ENCODE measurements at regions of chr5 and their contacts with region 1.

Region 1: DNA sequence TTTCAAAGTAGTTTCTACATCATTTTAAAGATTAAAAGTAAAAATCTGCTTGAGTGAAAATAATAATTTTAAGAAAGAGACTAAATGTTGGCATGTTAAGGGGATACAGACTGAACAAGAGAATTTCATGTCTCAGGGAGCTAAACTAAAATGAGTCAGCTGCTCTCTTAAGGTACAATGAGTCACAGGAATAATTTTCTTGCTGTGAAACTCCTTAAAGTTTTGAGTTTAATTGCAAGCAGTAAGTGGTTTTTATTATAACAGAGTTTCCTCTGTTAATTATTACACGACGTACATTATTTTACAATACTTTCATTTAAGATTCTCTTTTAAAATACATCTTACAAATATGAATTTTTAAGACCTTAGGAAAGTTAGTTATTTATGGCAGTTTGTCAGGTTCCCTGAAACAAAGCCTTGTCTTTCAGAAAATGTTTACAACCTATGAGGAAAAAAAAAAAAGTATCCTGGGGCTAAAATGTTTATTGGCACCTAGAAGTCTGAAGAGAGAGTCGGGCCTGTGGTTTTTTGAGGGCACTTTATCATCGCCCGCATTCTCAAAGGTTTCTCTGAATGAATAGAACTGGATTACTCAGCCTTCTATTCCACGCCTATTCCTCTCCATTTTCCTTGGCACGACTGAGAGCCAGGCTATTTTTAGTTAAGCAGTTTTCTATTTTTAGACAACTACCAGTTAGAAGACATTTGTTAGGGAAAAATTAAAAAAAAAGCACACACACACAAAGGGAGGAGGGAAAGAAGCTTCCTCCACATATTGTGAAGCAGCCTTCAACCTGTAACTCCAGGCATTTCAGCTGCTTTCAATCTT is 97.4 kb downstream of the MEF2C start:
- DNase-seq: peak; percentile 96
- H3K4me3 ChIP-seq: peak overlapping the region in 1 of 3 experiments; percentile 46
- H3K27ac ChIP-seq: peak overlapping the region; percentile 97
- H3K4me1 ChIP-seq: peaks cover 33% of the 10 kb centered on the region
- H3K27me3 ChIP-seq: no peaks in the 10 kb centered on the region
- CTCF ChIP-seq: no peak
- POLR2A ChIP-seq: no peak

Region 2: GRCh38 chr5:88226881-88227450 is 558.6 kb before region 1 on chr5:
- CTCF ChIA-PET with region 1: no interaction called
- POLR2A ChIA-PET with region 1: no interaction called
- dilution Hi-C with region 1: no loop called
- intact Hi-C with region 1: no loop called
- DNase-seq: no peak
- H3K4me3 ChIP-seq: no peak overlapping the region
- H3K27ac ChIP-seq: no peak overlapping the region
- H3K4me1 ChIP-seq: no peaks in the 10 kb centered on the region
- H3K27me3 ChIP-seq: no peaks in the 10 kb centered on the region
- CTCF ChIP-seq: no peak
- POLR2A ChIP-seq: no peak

Region 3: DNA sequence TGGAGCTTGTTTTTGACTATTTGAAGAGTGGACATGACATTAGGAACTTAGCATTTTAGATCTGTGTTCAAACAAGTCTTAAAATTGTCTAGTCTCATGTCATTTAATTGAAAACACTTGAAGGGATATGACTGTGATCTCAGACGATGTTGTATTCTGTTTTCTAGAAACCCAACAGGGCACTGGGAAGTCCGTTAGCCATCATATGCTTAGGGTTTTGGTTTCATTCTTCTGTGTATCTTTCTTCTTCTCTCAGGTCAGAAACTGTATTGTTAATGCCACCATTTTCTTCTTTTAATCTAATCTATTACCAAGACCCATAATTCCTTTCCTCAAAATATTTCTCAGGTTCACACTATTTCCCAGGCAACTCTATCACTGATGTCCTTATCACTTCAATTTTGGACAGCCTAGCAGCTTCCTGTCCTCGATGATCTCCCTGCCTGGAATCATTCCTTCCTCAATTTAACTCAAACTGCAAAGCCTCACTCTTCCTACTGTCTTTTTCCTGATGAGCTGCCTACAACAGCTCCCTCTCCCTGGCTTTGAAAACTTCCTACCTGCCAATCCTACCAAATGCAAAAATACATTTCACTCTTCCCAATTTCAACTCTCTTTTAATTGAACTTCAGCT is 19.7 kb after region 1 on chr5:
- CTCF ChIA-PET with region 1: interaction called, 7 read pairs
- POLR2A ChIA-PET with region 1: no interaction called
- dilution Hi-C with region 1: no loop called
- intact Hi-C with region 1: loop called (anchors 2 kb)
- DNase-seq: no peak
- H3K4me3 ChIP-seq: no peak overlapping the region
- H3K27ac ChIP-seq: no peak overlapping the region
- H3K4me1 ChIP-seq: no peaks in the 10 kb centered on the region
- H3K27me3 ChIP-seq: no peaks in the 10 kb centered on the region
- CTCF ChIP-seq: no peak
- POLR2A ChIP-seq: no peak

Region 4: GRCh38 chr5:88815050-88815789 is 29.6 kb after region 1 on chr5:
- CTCF ChIA-PET with region 1: no interaction called
- POLR2A ChIA-PET with region 1: no interaction called
- dilution Hi-C with region 1: no loop called
- intact Hi-C with region 1: loop called (anchors 1 kb)
- DNase-seq: peak; percentile 82
- H3K4me3 ChIP-seq: no peak overlapping the region
- H3K27ac ChIP-seq: peak overlapping the region; percentile 70
- H3K4me1 ChIP-seq: peaks cover 25% of the 10 kb centered on the region
- H3K27me3 ChIP-seq: no peaks in the 10 kb centered on the region
- CTCF ChIP-seq: no peak
- POLR2A ChIP-seq: no peak

Measured in endothelial cell of umbilical vein (primary cell).